ENCODE measurements at regions of chr3 and their contacts with region 1.

Region 1: GRCh38 chr3:138712086-138712485 is 103.5 kb downstream of the FAIM start:
- DNase-seq: no peak
- H3K4me3 ChIP-seq: no peak overlapping the region
- H3K27ac ChIP-seq: no peak overlapping the region
- H3K27me3 ChIP-seq: no peaks in the 10 kb centered on the region
- CTCF ChIP-seq: no peak

Region 2: DNA sequence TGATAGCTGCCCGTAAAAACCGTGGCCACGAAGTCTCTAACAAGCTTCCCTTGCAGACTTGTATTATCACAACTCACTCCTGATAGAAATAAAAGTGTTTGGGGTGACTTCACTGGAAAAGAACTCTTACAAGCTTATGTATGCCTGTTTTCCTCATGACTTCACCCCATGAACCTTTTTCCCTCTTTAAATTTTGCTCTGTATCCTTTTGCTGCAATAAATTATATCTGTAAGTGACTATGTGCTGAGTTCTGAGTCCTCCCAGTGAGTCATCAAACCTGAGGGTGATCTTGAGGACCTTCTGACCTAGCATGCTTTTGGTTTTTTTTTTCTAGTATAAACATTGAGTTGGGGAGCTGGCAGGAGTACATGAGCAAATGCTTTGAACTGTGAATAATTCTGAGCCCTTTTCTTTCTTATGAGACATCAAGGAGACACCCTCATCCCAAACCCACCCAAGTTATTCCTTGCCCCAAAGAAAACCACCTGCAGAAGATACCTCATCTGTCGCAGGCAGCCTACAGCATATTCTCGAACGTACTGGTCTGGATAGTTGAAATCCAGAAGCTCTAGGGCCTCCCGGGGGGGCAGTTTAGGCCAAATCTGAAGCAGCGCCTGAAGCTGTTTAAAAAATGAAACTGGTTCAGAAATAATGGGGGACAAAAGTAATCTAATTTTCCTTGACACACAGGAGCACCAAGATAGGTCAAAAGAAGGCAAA is 17.6 kb before region 1 on chr3:
- CTCF ChIA-PET with region 1: interaction called, 12 read pairs
- POLR2A ChIA-PET with region 1: no interaction called
- DNase-seq: peak; percentile 91
- H3K4me3 ChIP-seq: no peak overlapping the region
- H3K27ac ChIP-seq: peak overlapping the region; percentile 87
- H3K27me3 ChIP-seq: no peaks in the 10 kb centered on the region
- CTCF ChIP-seq: no peak

Measured in AG04450 (cell line).